ENCODE measurements at regions of chr7 and their contacts with region 1.

Region 1: GRCh38 chr7:25093268-25093826 is 31.7 kb downstream of the CYCS start:
- DNase-seq: peak; percentile 90
- ATAC-seq: peak; percentile 91
- H3K4me3 Mint-ChIP-seq: no peak overlapping the region
- H3K27ac Mint-ChIP-seq: no peak overlapping the region
- H3K4me1 Mint-ChIP-seq: peaks cover 12% of the 10 kb centered on the region
- H3K27me3 Mint-ChIP-seq: peaks cover 2% of the 10 kb centered on the region

Region 2: GRCh38 chr7:23570592-23571200 is 1522.7 kb before region 1 on chr7:
- CTCF ChIA-PET with region 1: no interaction called
- POLR2A ChIA-PET with region 1: no interaction called
- intact Hi-C with region 1: loop called in 1 of 2 experiments (anchors 10 kb)
- DNase-seq: peak; percentile 83
- ATAC-seq: peak; percentile 92
- H3K4me3 Mint-ChIP-seq: no peak overlapping the region
- H3K27ac Mint-ChIP-seq: no peak overlapping the region
- H3K4me1 Mint-ChIP-seq: no peaks in the 10 kb centered on the region
- H3K27me3 Mint-ChIP-seq: peaks cover 4% of the 10 kb centered on the region

Region 3: DNA sequence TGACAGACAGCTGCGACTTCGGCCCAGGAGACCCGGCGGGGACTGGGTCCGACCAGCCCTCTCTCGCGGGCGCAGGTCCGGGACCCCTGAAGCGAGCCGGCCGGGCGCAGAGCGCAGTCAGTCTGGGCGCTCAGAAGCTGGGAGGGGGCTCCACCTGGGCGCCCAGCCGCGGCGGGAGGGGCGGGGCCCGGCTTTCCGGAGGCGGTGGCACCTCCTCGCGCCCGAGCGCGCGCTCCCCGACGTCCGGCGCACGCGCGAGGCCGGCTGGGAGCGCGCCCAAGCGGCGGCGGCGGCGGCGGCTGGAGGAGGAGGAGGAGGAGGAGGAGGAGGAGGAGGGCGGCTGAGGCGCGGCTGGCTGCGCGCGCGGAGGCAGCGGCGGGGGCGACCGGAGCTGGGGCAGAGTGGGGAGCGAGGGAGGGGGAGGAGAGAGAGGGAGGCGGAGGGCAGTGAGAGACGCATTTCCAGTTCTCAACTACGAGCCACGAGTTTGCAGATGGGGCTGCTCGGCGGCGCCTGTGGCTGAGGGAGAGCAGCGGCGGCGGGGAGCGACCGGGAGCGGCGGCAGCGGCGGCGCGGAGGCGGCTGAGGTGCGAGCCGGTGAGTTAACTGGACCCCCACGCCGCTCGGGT is 520.2 kb before region 1 on chr7 and contains the start of gene PALS2:
- CTCF ChIA-PET with region 1: interaction called, 4 read pairs
- POLR2A ChIA-PET with region 1: no interaction called
- intact Hi-C with region 1: loop called (anchors 2 to 10 kb)
- DNase-seq: peak; percentile 86
- ATAC-seq: peak; percentile 68
- H3K4me3 Mint-ChIP-seq: peak within 1 kb of the TSS; percentile 88
- H3K27ac Mint-ChIP-seq: peak within 1 kb of the TSS; percentile 86
- H3K4me1 Mint-ChIP-seq: peaks cover 34% of the 10 kb centered on the region
- H3K27me3 Mint-ChIP-seq: peaks cover 12% of the 10 kb centered on the region
- total RNA-seq, gene PALS2: 20.8 to 41.7 TPM

Region 4: GRCh38 chr7:24877790-24878311 is 215.5 kb before region 1 on chr7:
- CTCF ChIA-PET with region 1: interaction called, 10 read pairs
- POLR2A ChIA-PET with region 1: no interaction called
- intact Hi-C with region 1: no loop called
- DNase-seq: peak; percentile 59
- ATAC-seq: peak; percentile 78
- H3K4me3 Mint-ChIP-seq: peak overlapping the region; percentile 29
- H3K27ac Mint-ChIP-seq: peak overlapping the region; percentile 69
- H3K4me1 Mint-ChIP-seq: peaks cover 56% of the 10 kb centered on the region
- H3K27me3 Mint-ChIP-seq: no peaks in the 10 kb centered on the region

Region 5: GRCh38 chr7:24936121-24936824 is 157.1 kb before region 1 on chr7:
- CTCF ChIA-PET with region 1: no interaction called
- POLR2A ChIA-PET with region 1: no interaction called
- intact Hi-C with region 1: no loop called
- DNase-seq: no peak
- ATAC-seq: peak; percentile 30
- H3K4me3 Mint-ChIP-seq: no peak overlapping the region
- H3K27ac Mint-ChIP-seq: peak overlapping the region; percentile 32
- H3K4me1 Mint-ChIP-seq: peaks cover 36% of the 10 kb centered on the region
- H3K27me3 Mint-ChIP-seq: no peaks in the 10 kb centered on the region

Region 6: DNA sequence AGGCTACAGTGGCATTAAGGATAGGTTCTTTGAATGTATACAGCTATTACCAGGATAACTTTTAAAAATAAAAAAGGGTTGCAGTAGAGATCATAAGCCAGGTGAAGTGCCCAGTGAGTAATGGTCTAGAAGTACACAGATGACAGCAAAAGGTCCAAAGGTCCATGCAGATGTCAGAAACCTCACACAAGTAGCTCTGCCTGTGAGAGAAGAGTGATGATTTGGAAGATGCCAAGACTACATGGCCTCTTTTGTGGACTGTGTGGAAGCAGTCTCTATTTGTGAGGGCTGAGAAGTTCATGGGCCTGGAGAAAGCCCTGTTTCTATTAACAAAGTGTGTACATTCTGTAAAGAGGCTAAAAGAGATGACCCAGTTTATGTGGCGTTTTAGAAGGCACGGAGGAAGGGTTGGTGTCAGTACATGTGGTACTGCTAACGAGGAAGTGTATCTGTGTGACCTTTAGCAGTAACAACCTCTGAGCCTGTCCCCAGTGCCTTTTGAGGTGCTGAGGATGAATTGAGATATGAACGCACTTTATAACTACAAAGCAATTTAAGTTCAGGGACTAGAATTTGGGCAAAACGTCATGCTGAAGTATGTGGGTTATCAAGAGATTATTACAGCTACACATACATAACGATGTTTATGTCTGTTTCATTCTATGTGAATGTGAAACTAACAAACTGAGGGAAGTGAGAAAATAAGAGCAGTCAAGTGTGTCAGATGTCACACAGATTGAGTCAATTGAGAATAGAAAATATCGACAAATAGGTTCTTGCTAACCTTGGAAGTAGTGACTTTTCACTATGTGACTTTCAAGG is 24.1 kb after region 1 on chr7:
- CTCF ChIA-PET with region 1: interaction called, 18 read pairs
- POLR2A ChIA-PET with region 1: no interaction called
- intact Hi-C with region 1: no loop called
- DNase-seq: no peak
- ATAC-seq: peak; percentile 86
- H3K4me3 Mint-ChIP-seq: peak overlapping the region; percentile 12
- H3K27ac Mint-ChIP-seq: peak overlapping the region; percentile 43
- H3K4me1 Mint-ChIP-seq: peaks cover 53% of the 10 kb centered on the region
- H3K27me3 Mint-ChIP-seq: no peaks in the 10 kb centered on the region